ENCODE measurements at regions of chr9 and their contacts with region 1.

Region 1: DNA sequence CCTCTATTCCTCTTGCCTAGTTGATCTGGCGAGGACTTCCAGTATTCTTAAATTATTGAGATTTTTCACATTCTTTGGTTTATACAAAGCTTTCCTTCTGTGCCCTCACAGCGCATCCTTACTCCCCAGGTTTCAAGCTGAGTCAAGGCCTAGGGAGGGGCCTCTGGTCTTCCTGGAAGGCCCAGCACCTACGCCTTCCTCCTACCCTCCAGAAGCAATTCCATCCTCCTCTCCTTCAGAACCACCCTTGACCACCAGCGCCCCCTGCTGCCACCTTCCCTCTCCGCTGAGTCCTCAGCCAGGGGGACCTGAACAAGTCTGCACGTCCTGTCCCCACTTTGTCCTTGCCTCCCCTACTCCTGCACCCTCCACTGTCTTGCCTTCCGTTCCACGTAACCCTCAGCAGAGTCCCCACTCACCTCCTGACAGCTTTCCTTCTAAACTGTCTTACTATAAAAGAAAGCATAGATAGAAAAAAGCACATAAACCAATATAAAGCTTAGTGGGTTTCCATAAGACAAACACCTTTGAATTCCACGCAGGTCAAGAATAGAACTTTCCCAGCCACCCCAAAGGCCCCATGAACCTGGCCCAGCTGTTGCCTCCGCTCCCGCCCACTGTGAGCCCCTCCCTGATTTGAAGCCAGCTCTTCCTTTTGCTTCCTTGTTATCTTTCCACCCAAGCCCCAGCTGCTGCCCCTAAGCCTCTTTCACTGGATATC is 63.0 kb upstream of the CTSL start:
- DNase-seq: peak; percentile 31
- H3K4me3 Mint-ChIP-seq: no peak overlapping the region
- H3K27ac Mint-ChIP-seq: no peak overlapping the region
- H3K4me1 Mint-ChIP-seq: peaks cover 7% of the 10 kb centered on the region
- H3K27me3 Mint-ChIP-seq: no peaks in the 10 kb centered on the region

Region 2: DNA sequence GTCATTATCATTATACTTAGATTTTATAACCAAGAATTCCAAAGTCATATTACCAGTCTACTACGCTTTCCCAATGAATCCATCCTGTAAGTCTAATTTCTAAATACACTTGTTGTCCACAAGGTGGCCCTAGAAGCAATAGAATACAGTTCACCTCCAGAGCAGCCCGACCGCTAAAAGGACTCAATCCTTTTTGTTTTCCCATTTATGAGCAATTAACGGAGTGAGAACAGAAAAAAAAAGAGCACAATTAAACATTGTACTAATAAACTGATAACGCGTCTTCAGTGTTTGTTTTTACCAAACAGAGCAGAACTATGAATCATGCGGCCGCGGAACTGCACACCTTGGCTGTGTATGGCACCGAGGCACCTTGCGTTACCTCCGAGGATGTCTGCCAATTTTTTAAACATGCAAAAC is 326.0 kb before region 1 on chr9:
- intact Hi-C with region 1: loop called (anchors 1 kb)
- DNase-seq: no peak
- H3K4me3 Mint-ChIP-seq: peak overlapping the region; percentile 65
- H3K27ac Mint-ChIP-seq: no peak overlapping the region
- H3K4me1 Mint-ChIP-seq: peaks cover 8% of the 10 kb centered on the region
- H3K27me3 Mint-ChIP-seq: peaks cover 27% of the 10 kb centered on the region

Region 3: GRCh38 chr9:87640385-87640795 is 22.6 kb before region 1 on chr9:
- intact Hi-C with region 1: no loop called
- DNase-seq: no peak
- H3K4me3 Mint-ChIP-seq: no peak overlapping the region
- H3K27ac Mint-ChIP-seq: no peak overlapping the region
- H3K4me1 Mint-ChIP-seq: peaks cover 7% of the 10 kb centered on the region
- H3K27me3 Mint-ChIP-seq: no peaks in the 10 kb centered on the region

Measured in activated T-helper 2 cell treated with anti-CD3 and anti-CD28 coated beads, Interferon-gamma antibody, Interleukin-2, Interleukin-4, amounts not matched to agents 10 μg/mL and 5 μg/mL and 100 μg/mL, durations not matched to agents 14 hours and 24 hours and 36 hours (primary cell).